ENCODE measurements at regions of chr1 and their contacts with region 1.

Region 1: DNA sequence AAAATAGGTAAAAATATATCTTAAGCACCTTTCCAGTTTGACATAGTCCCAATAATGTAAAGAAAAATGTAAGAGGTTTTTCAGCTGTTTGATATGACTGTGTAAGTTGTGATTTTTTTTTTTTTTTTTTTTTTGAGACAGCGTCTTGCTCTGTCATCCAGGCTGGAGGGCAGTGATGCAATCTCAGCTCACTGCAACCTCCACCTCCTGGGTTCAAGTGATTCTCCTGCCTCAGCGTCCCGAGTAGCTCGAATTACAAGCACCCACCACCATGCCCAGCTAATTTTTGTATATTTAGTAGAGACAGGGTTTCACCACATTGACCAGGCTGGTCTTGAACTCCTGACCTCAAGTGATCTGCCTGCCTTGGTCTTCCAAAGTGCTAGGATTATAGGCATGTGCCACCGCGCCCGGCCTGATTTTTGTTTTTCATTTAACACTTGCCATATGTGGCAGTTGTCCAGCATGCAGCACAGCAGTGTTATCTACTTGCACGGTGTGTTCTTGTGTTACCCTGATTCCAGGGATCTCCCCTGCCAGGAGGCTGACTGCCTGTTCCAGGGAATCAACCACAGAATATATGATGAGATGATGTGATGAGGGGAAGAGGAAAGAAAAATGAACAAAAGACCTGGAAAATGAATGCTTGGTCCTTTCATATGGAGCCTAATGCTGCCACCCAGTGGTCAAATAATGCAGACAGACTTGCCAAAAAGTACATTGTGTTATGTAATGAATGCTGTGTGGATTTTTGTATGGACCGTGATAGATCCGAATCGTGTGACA is 79.0 kb downstream of the RAVER2 start:
- DNase-seq: peak in 38 of 42 donors; percentile 12 to 89 (median 69)

Region 2: GRCh38 chr1:64268653-64269557 is 555.0 kb before region 1 on chr1:
- intact Hi-C with region 1: loop called (anchors 10 kb)
- DNase-seq: peak in 41 of 42 donors; percentile 6 to 92 (median 77)

Region 3: GRCh38 chr1:64686828-64687724 is 136.8 kb before region 1 on chr1:
- intact Hi-C with region 1: loop called (anchors 5 kb)
- DNase-seq: peak in 19 of 42 donors; percentile 6 to 69 (median 45)

Region 4: GRCh38 chr1:64744492-64745180 is 79.2 kb before region 1 on chr1 and contains the start of gene RAVER2:
- intact Hi-C with region 1: loop called (anchors 10 kb)
- DNase-seq: peak in 41 of 42 donors; percentile 12 to 82 (median 59)

Region 5: DNA sequence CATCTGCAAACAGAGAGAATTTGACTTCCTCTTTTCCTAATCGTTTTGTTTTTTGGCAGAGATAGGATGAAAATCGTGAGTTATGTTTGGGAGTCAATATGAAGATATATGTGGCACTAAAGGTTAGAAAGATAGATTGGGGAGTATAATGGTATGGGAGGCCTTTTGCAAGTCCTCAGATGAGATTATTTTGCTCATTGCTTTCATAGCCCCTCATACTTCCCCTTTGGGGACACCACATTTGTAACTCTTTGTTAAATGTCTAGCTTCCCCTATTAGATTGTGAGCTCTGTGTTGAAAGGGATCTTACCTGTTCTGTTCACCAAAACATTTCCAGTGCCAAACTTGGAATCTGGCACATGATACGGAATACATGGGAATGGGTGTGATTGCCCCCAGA is 48.8 kb before region 1 on chr1:
- intact Hi-C with region 1: no loop called
- DNase-seq: no peak

Region 6: DNA sequence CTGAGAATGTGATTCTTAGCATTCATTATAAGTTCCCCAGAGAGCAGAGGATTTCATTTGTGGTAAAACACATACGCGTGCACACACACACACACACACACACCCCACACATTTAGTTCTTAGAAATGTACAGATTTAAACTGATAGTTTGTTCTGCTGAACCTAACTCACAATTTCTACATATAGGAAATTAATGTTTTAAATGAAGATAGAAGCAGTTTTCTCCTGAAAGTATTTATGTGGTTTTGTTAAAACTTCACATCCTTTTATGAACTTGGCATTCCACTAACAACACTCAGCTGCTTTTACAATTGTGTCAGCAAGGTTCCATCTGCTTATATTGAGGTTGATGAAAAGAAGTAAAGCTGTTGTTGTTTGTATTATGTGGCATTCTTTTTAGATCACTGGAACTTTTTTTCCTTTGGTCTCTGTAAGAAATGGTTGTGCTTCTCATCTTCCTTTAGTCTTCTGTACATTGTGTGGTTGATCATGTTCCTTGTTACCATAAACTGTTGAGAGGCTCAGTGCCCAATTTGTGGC is 365.8 kb after region 1 on chr1:
- intact Hi-C with region 1: no loop called
- DNase-seq: no peak